IMR-90 (cell line): ENCODE measurements at regions of chr2 and their contacts with region 1.

Region 1: DNA sequence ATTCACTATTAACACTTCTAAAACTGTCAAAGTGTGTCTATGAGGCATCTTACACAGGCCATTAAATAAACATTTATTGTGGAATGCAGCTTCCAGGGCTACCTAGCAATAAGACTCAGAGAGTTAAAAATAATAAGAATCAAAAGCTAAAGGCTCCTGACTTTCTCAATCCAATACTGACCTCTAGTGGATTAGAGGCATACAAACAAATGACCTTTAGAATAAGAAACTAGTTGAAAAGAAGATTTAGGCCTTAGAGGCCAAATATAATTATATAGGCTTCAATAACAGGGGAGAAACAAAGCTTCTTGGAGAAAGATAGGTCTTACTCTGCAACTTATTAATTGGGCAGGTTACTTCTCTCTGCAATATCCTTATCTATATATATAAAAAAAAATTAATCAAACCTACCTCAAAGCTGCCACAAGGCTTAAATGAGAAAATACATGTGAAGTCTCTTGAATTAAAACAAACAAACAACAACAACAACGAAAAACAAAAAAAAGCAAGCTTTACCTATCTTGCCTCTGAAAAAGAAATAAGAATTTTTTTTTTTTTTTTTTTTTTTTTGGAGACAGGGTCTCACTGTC is 246.1 kb downstream of the EXOC6B start:
- DNase-seq: peak; percentile 64
- ATAC-seq: peak; percentile 65
- H3K4me3 ChIP-seq: no peak overlapping the region
- H3K27ac ChIP-seq: no peak overlapping the region
- H3K4me1 ChIP-seq: peaks cover 2% of the 10 kb centered on the region; the same call in 1 of the 2 replicates
- H3K27me3 ChIP-seq: no peaks in the 10 kb centered on the region
- CTCF ChIP-seq: peak; percentile 75
- POLR2A ChIP-seq: no peak
- RAD21 ChIP-seq: peak; percentile 85

Region 2: DNA sequence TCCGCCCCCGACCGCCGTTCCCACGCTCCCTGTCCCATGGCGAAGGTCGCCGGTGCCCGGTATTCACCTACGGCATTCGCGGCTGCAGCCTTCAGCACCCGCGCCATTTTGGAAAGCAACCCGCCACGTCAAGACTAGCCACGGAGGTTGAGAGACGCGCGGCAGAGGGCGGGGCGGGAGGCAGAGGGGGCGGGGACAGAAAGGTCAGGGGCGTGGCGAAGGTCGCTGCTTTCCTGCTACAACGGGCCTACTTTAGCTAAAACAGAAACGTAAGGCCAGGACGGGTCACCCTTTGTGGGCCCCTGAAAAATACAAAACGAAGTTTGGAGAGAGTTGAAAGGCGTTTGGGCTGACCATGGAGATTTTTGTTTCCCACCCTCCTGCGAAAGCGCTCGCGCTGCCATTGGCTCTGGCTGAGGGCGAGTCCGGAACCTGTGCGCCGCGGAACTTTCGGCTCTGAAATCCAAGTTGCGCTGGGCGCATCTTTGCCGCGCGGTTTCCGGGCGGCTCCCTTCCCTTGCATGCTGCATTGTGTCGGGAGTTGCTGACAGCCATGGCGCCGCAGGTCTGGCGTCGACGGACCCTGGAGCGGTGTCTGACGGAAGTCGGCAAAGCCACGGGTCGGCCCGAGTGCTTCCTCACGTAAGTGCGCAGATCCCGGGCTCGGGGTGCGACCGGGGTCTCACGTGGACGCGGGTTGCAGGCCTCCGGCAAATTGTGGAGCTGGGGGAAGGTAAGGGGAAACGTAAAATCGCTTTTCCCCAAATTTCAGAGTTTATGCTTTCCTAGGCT is 1449.4 kb before region 1 on chr2 and contains the starts of genes MCEE and MPHOSPH10:
- CTCF ChIA-PET with region 1: no interaction called
- POLR2A ChIA-PET with region 1: no interaction called
- dilution Hi-C with region 1: no loop called
- in situ Hi-C with region 1: no loop called
- intact Hi-C with region 1: loop called (anchors 5 kb)
- DNase-seq: peak; percentile 90
- ATAC-seq: peak; percentile 96
- H3K4me3 ChIP-seq: peak within 1 kb of the TSS; percentile 78
- H3K27ac ChIP-seq: peak within 1 kb of the TSS; percentile 84
- H3K4me1 ChIP-seq: peaks cover 3% of the 10 kb centered on the region; the same call in 1 of the 2 replicates
- H3K27me3 ChIP-seq: no peaks in the 10 kb centered on the region
- CTCF ChIP-seq: no peak
- POLR2A ChIP-seq: peak; percentile 70
- RAD21 ChIP-seq: no peak
- total RNA-seq, gene MCEE: 11.1 and 13.9 TPM in 2 replicates
- total RNA-seq, gene MPHOSPH10: 5.4 and 15.6 TPM in 2 replicates

Region 3: DNA sequence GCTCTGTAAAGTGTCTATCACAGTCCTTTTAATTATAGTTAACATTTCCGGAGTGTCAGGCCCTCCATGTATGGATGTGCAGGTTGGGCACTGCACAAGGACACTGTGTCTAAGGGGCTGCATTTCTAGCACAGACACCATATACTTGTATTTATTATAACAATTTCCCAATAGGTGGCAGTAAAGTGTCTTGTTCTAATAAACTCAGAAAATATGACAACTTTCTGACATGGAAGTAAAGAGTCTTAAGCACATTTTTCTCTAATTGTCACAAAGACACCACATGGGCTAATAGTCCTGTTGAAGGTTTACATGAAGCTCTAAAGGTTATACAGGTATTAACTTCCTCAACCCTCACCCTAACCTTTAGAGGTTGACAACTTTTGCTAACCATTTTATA is 969.7 kb before region 1 on chr2:
- CTCF ChIA-PET with region 1: no interaction called
- POLR2A ChIA-PET with region 1: no interaction called
- dilution Hi-C with region 1: no loop called
- in situ Hi-C with region 1: no loop called
- intact Hi-C with region 1: loop called (anchors 5 kb)
- DNase-seq: peak; percentile 54
- ATAC-seq: peak; percentile 81
- H3K4me3 ChIP-seq: no peak overlapping the region
- H3K27ac ChIP-seq: no peak overlapping the region
- H3K4me1 ChIP-seq: no peaks in the 10 kb centered on the region
- H3K27me3 ChIP-seq: peaks cover 42% of the 10 kb centered on the region
- CTCF ChIP-seq: peak; percentile 49
- POLR2A ChIP-seq: no peak
- RAD21 ChIP-seq: peak; percentile 43

Region 4: DNA sequence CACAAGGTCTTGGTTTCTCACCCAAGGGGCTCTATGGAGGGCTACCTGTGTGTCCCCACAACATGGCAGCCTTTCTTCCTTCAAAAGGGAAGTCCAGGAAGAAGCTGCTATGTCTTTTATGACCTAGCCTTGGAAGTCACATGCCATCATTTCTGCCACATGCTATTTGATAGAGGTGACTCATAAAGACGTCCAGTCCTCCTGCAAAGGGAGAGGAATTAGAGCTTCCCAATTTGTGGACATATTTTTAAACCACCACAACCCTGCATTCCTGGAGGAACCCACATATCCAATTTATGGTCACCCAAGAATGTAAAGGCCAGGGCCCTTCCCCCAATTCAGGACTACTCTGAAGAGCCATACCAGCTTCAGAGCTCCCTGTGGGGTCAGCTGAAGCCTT is 678.2 kb before region 1 on chr2:
- CTCF ChIA-PET with region 1: no interaction called
- POLR2A ChIA-PET with region 1: no interaction called
- dilution Hi-C with region 1: no loop called
- in situ Hi-C with region 1: no loop called
- intact Hi-C with region 1: no loop called
- DNase-seq: no peak
- ATAC-seq: no peak
- H3K4me3 ChIP-seq: no peak overlapping the region
- H3K27ac ChIP-seq: no peak overlapping the region
- H3K4me1 ChIP-seq: no peaks in the 10 kb centered on the region
- H3K27me3 ChIP-seq: peaks cover 32% of the 10 kb centered on the region
- CTCF ChIP-seq: no peak
- POLR2A ChIP-seq: no peak
- RAD21 ChIP-seq: no peak

Region 5: DNA sequence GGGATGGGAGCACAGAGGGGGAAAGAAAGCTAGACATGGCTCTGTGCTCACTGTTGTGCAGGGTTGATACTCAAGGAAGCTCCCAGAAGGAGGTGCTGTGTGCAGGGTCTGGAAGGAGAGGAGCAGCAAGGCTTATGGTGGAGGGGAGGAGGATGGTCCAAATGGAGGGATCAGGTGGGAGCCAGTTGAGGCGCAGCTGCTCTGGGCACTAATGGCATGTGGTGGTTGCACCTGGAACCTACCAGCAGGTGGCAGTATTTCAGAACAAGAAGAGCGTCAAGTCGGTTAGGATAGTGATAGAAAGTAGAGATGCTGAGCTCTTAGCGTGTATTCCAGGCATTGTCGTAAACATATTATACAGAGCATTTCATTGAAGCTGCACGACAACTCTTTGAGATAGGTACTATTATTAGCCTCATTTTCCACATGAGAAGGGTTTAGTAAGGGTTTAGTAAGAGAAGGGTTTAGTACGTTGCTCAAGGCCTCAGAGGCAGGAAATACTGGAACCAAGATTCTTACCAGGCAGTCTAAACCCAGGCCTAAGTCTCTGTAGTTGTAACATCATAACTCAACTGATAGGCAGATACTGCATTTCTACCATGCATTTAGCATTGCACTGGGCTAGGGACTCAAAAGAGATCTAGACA is 655.7 kb before region 1 on chr2:
- CTCF ChIA-PET with region 1: no interaction called
- POLR2A ChIA-PET with region 1: no interaction called
- dilution Hi-C with region 1: no loop called
- in situ Hi-C with region 1: loop called (anchors 10 kb)
- intact Hi-C with region 1: loop called (anchors 1 kb)
- DNase-seq: peak; percentile 65
- ATAC-seq: peak; percentile 72
- H3K4me3 ChIP-seq: no peak overlapping the region
- H3K27ac ChIP-seq: no peak overlapping the region
- H3K4me1 ChIP-seq: no peaks in the 10 kb centered on the region
- H3K27me3 ChIP-seq: peaks cover 12% of the 10 kb centered on the region
- CTCF ChIP-seq: peak; percentile 76
- POLR2A ChIP-seq: no peak
- RAD21 ChIP-seq: peak; percentile 67

Region 6: DNA sequence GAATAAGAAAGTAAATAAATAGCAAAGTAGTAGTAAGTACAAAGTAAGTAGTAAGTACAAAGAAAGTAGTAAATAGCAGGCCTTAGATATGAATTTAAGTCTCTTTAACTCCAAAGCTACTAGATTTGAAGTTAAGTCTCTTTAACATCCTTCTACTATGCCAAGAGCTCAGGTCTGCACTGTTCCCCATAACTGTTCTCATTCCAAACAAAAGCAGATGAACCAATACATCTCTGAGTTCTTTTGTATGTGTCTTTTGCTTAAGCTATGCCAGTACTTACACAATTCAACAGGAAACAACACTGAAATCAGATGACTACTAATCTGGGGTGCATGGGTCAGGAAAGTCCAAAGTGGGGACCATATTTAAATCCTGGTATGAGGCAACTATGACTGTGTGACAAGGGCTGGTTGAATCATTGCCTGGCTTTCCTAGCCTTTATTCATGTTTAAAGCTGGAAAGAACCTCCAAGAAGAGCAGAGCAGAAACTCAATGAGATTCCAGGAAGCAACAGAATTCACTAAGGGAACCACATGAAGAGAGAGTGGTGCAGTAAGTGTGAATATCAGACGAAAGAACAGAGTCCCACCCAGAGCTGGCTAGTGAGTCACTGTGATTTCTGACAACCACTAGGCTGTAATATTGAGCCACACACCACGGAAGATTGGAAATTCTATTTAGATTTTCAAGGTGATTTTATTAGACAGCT is 381.0 kb before region 1 on chr2:
- CTCF ChIA-PET with region 1: interaction called, 3 read pairs
- POLR2A ChIA-PET with region 1: no interaction called
- dilution Hi-C with region 1: no loop called
- in situ Hi-C with region 1: no loop called
- intact Hi-C with region 1: loop called (anchors 1 kb)
- DNase-seq: peak; percentile 57
- ATAC-seq: peak; percentile 76
- H3K4me3 ChIP-seq: no peak overlapping the region
- H3K27ac ChIP-seq: no peak overlapping the region
- H3K4me1 ChIP-seq: peaks cover 2% of the 10 kb centered on the region
- H3K27me3 ChIP-seq: no peaks in the 10 kb centered on the region
- CTCF ChIP-seq: peak; percentile 42
- POLR2A ChIP-seq: no peak
- RAD21 ChIP-seq: peak; percentile 42